HCT116 (cell line): ENCODE measurements at regions of chr6 and their contacts with region 1.

Region 1: GRCh38 chr6:32971581-32972352 is 3.4 kb downstream of the BRD2 start:
- DNase-seq: peak; percentile 100
- ATAC-seq: peak; percentile 57
- H3K4me3 ChIP-seq: peak overlapping the region; percentile 82 to 95
- H3K27ac ChIP-seq: peak overlapping the region; percentile 97
- H3K4me1 ChIP-seq: peaks cover 11 to 60% of the 10 kb centered on the region in 2 experiments
- H3K27me3 ChIP-seq: no peaks in the 10 kb centered on the region
- CTCF ChIP-seq: no peak
- POLR2A ChIP-seq: peak; percentile 98
- RAD21 ChIP-seq: no peak

Region 2: DNA sequence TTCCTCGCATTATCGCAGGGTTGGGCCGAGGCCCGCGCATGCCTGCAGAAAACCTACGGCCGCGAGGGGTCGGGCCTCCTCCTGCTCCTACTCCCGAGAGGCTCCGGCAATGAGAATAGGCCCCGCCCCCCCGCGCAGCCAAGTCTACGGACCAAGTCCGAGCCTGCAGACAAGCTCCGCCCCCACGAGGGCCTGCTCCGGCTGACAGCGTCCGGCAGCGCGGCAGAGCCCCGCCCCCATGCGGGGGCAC is 776.2 kb before region 1 on chr6:
- CTCF ChIA-PET with region 1: no interaction called
- POLR2A ChIA-PET with region 1: interaction called, 11 read pairs
- RAD21 ChIA-PET with region 1: no interaction called
- intact Hi-C with region 1: no loop called
- DNase-seq: peak; percentile 99
- ATAC-seq: peak; percentile 88
- H3K4me3 ChIP-seq: peak overlapping the region; percentile 70 to 76
- H3K27ac ChIP-seq: peak overlapping the region; percentile 99
- H3K4me1 ChIP-seq: peaks cover 27 to 58% of the 10 kb centered on the region in 2 experiments
- H3K27me3 ChIP-seq: no peaks in the 10 kb centered on the region
- CTCF ChIP-seq: peak in 1 of 3 experiments; percentile 54; a peak in 2 of 6 replicates
- POLR2A ChIP-seq: peak; percentile 17
- RAD21 ChIP-seq: no peak

Region 3: DNA sequence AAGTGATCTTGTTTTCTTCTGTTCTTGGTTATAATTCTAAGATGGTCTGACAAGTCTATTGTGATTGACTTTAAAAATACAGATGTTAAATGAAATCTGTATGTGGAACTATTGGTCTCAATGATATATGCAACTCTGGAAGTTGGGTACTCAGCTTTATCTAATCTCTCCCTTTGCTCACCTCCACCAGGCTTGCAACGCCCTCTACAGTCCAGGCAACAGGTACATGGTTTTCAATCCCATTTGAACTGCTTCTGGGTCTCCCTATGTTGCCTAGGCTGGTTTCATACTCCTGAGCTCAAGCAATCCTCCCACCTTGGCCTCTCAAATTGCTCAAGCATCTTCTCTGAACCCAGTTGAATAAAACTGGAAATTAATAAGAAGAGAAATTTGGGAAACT is 279.7 kb before region 1 on chr6:
- CTCF ChIA-PET with region 1: no interaction called
- POLR2A ChIA-PET with region 1: no interaction called
- RAD21 ChIA-PET with region 1: no interaction called
- intact Hi-C with region 1: no loop called
- DNase-seq: peak; percentile 42
- ATAC-seq: peak; percentile 91
- H3K4me3 ChIP-seq: no peak overlapping the region
- H3K27ac ChIP-seq: no peak overlapping the region
- H3K4me1 ChIP-seq: no peaks in the 10 kb centered on the region
- H3K27me3 ChIP-seq: no peaks in the 10 kb centered on the region
- CTCF ChIP-seq: peak; percentile 65 to 80 (median 66); a peak in 5 of 6 replicates
- POLR2A ChIP-seq: no peak
- RAD21 ChIP-seq: peak; percentile 87

Region 4: GRCh38 chr6:32862725-32863124 is 109.0 kb before region 1 on chr6:
- CTCF ChIA-PET with region 1: interaction called, 16 read pairs
- POLR2A ChIA-PET with region 1: interaction called, 14 read pairs
- RAD21 ChIA-PET with region 1: interaction called in 1 of 2 experiments, 3 read pairs
- intact Hi-C with region 1: no loop called
- DNase-seq: no peak
- ATAC-seq: no peak
- H3K4me3 ChIP-seq: no peak overlapping the region
- H3K27ac ChIP-seq: no peak overlapping the region
- H3K4me1 ChIP-seq: peaks cover 2 to 17% of the 10 kb centered on the region in 2 experiments; a peak in 3 of 4 replicates
- H3K27me3 ChIP-seq: no peaks in the 10 kb centered on the region
- CTCF ChIP-seq: no peak
- POLR2A ChIP-seq: no peak
- RAD21 ChIP-seq: no peak

Region 5: DNA sequence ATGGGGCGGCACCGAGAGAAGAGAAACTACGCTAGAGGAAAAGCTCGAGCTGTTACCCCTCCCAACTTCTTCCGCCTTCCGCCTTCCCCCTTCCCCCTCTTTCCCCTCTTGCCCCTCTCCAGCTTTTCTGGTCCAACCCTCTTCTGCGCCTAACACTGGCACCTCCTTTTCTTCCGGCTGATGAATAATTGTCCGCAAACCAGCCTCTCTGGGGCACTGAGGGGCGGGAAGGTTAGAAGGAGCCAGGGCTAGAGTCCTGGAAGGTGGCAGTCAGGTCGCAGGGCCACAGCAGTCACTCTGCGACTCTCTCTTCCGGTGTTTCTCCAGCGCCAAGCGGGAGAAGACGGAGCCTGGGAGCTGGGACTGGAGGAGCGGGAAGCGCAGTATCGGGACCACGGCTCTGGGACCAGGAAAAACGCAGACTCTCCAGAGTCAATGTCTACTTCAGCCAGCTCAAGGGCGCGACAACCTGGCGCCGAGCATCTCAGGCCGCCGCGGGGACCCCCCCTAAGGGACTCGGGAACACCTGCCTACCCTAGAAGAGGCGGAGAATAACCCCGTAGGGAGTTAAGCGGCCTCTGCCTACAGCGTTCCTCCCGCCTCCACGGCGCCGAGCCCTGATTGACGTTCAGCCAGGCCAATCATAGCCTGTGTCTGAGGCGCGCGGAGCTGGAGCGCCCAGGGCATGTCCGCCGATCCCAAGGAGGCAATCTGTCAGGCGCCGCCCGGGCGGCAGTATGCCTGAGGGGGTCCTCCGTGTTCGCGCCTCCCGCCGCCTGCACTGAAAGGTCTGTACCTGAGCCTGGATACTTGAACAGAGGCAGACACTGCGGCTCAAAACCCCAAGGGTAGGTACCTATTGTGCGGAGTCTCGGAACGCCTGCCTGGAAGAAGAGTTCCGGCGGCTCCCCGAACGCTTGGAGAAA is 77.4 kb before region 1 on chr6:
- CTCF ChIA-PET with region 1: interaction called, 3 read pairs
- POLR2A ChIA-PET with region 1: interaction called, 30 read pairs
- RAD21 ChIA-PET with region 1: interaction called in 1 of 2 experiments, 4 read pairs
- intact Hi-C with region 1: loop called (anchors 5 kb)
- DNase-seq: peak; percentile 85
- ATAC-seq: peak; percentile 100
- H3K4me3 ChIP-seq: peak overlapping the region; percentile 71 to 72
- H3K27ac ChIP-seq: peak overlapping the region; percentile 72
- H3K4me1 ChIP-seq: peaks cover 4 to 16% of the 10 kb centered on the region in 2 experiments; a peak in 3 of 4 replicates
- H3K27me3 ChIP-seq: no peaks in the 10 kb centered on the region
- CTCF ChIP-seq: no peak
- POLR2A ChIP-seq: no peak
- RAD21 ChIP-seq: no peak

Region 6: GRCh38 chr6:32952817-32953739 is 18.7 kb before region 1 on chr6 and contains the start of gene HLA-DMA:
- CTCF ChIA-PET with region 1: interaction called, 73 read pairs
- POLR2A ChIA-PET with region 1: interaction called, 143 read pairs
- RAD21 ChIA-PET with region 1: no interaction called
- intact Hi-C with region 1: loop called (anchors 1 kb)
- DNase-seq: peak; percentile 81
- ATAC-seq: peak; percentile 95
- H3K4me3 ChIP-seq: no peak within 1 kb of the TSS
- H3K27ac ChIP-seq: no peak within 1 kb of the TSS
- H3K4me1 ChIP-seq: peaks cover 0 to 17% of the 10 kb centered on the region in 2 experiments; a peak in 2 of 4 replicates
- H3K27me3 ChIP-seq: no peaks in the 10 kb centered on the region
- CTCF ChIP-seq: peak; percentile 21 to 69 (median 68); a peak in 5 of 6 replicates
- POLR2A ChIP-seq: no peak
- RAD21 ChIP-seq: peak; percentile 35
- total RNA-seq, gene HLA-DMA: 12.1 TPM

Region 7: GRCh38 chr6:33235221-33235634 is 263.5 kb after region 1 on chr6:
- CTCF ChIA-PET with region 1: no interaction called
- POLR2A ChIA-PET with region 1: no interaction called
- RAD21 ChIA-PET with region 1: no interaction called
- intact Hi-C with region 1: no loop called
- DNase-seq: no peak
- ATAC-seq: no peak
- H3K4me3 ChIP-seq: no peak overlapping the region
- H3K27ac ChIP-seq: no peak overlapping the region
- H3K4me1 ChIP-seq: no peaks in the 10 kb centered on the region
- H3K27me3 ChIP-seq: no peaks in the 10 kb centered on the region; the same call in 1 of the 2 replicates
- CTCF ChIP-seq: no peak
- POLR2A ChIP-seq: no peak
- RAD21 ChIP-seq: no peak

Region 8: DNA sequence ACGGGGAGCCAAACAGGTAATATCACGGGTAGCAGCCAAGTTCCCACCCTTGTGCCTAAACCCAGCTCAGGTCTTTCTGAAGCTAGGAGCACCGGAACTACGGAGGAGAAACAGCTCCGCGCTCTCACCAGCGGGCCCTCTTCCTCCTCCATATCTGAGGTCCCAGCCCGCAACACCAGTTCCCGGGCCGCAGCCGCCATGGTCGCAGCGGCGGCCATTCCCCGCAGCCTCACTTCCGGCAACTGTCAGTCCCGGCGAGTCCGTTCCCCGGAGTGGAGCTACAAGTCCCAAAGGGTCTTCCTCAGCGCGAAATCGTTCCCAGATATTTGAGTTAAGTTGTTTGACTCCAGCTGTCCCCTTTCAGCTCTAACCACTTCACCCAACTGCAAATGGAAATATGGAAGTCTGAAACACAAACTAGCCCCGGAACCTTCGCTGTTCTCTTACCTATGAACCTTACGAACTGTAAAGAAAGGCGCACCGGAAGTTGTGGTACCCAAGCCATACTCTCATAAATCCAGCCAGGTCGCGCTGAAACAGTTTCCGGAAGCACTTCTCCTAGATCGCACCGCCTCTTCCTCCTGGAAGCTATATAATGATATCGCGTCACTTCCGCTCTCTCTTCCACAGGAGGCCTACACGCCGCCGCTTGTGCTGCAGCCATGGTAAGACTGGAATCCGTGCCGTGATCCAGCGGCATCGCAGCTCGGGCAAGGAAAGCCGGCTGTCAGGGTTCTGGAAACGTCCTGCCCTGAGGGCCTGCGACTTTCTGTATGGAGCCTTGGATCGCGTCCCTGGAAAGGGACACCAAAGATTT is 299.9 kb after region 1 on chr6 and contains the starts of genes RPS18 and VPS52:
- CTCF ChIA-PET with region 1: no interaction called
- POLR2A ChIA-PET with region 1: interaction called, 10 read pairs
- RAD21 ChIA-PET with region 1: no interaction called
- intact Hi-C with region 1: no loop called
- DNase-seq: peak; percentile 99
- ATAC-seq: peak; percentile 76
- H3K4me3 ChIP-seq: peak within 1 kb of the TSS; percentile 75 to 99
- H3K27ac ChIP-seq: peak within 1 kb of the TSS; percentile 82
- H3K4me1 ChIP-seq: peaks cover 32 to 47% of the 10 kb centered on the region in 2 experiments
- H3K27me3 ChIP-seq: no peaks in the 10 kb centered on the region
- CTCF ChIP-seq: no peak
- POLR2A ChIP-seq: peak; percentile 98
- RAD21 ChIP-seq: no peak
- total RNA-seq, gene RPS18: 4,062 TPM
- total RNA-seq, gene VPS52: 58.2 TPM

Region 9: DNA sequence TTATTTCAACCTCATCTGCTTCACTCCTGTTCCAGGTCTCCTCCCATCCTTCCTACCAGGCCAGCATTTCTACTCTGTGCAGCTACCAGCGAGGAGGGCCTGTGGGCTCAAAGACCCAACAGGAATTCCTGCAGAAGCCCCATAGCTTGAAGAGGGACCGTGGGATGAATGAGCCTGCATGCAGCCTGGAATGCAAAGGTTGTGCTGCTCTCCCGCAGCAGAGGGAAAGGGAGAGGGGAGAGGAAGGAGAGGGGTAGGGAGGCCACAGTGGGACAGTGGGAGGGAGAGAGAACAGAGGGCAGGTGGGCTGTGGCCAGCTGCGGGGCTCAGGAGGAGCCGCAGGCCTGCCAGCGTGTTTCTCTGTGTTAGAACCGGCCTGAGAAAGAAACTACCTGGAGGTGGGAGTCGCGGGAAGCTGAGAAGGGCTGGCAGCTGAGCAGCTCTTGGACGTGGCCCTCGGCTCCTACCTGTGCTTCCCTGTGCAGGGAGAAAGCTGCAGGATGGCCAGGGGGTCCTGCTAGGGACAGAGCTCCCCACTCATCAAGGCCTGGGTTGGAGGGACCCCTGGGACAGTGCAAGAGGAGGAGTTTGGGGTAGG is 898.2 kb after region 1 on chr6:
- CTCF ChIA-PET with region 1: no interaction called
- POLR2A ChIA-PET with region 1: no interaction called
- RAD21 ChIA-PET with region 1: no interaction called
- intact Hi-C with region 1: no loop called
- DNase-seq: no peak
- ATAC-seq: no peak
- H3K4me3 ChIP-seq: no peak overlapping the region
- H3K27ac ChIP-seq: no peak overlapping the region
- H3K4me1 ChIP-seq: no peaks in the 10 kb centered on the region
- H3K27me3 ChIP-seq: no peaks in the 10 kb centered on the region
- CTCF ChIP-seq: no peak
- POLR2A ChIP-seq: no peak
- RAD21 ChIP-seq: no peak